Calu3 (cell line): ENCODE measurements at regions of chr12 and their contacts with region 1.

Region 1: DNA sequence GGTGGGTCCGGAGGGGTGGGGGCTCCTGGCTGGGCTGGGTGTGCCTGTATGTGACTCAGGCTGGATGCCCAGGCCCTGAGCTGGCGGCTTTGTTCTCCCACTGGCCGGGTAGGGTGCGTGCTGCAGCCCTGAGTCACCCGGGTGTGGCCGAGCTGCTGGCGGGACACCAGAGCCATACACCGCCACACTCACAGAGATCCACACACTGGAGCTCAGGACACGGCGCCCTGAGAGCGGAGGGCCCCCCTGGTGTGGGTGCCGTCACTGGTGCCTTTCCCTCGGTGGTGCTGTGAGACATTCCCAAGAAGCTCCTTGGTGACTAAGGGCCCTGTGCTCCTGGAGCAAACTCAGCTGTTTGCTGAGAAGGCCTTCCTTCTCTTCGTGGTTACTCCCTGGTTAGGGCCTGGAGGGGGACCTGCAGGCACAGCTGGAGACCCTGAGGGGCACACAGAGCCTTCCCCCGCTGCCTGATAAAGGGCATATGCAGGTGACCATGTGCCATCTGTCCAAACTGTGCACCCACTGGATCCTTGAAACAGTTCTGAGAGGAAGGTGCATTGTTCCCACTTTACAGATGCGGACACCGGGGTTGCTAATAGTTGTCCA is 44.3 kb downstream of the KRT80 start:
- DNase-seq: peak; percentile 96
- H3K4me3 Mint-ChIP-seq: peak overlapping the region; percentile 60
- H3K27ac Mint-ChIP-seq: peak overlapping the region; percentile 100
- H3K4me1 Mint-ChIP-seq: peaks cover 65% of the 10 kb centered on the region
- H3K27me3 Mint-ChIP-seq: no peaks in the 10 kb centered on the region
- CTCF ChIP-seq: no peak

Region 2: GRCh38 chr12:51846911-51847642 is 300.4 kb before region 1 on chr12:
- CTCF ChIA-PET with region 1: no interaction called
- intact Hi-C with region 1: no loop called
- DNase-seq: peak; percentile 22
- H3K4me3 Mint-ChIP-seq: peak overlapping the region; percentile 7
- H3K27ac Mint-ChIP-seq: no peak overlapping the region
- H3K4me1 Mint-ChIP-seq: peaks cover 7% of the 10 kb centered on the region
- H3K27me3 Mint-ChIP-seq: peaks cover 75% of the 10 kb centered on the region
- CTCF ChIP-seq: no peak

Region 3: DNA sequence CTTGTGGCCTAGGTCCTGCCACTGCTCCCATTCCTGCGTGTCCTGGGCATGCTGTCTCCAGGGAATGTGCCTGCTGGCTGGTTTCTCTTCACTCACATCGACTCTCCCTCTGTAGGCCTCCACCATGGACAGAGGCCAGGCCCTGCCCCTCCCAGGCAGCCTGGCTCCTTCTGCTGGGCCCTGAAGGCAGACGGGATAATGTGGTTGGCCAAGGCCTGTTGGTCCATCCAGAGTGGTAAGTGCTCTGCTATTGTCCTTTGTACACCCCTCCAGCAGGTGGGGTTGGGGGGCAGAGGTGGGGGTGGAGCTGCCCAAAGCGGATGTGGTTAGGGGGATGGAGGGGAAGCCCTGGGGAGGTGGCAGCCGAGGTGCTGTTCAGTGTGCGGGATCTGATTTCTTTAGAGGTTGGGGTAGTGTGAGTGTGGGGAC is 105.8 kb before region 1 on chr12:
- CTCF ChIA-PET with region 1: no interaction called
- intact Hi-C with region 1: no loop called
- DNase-seq: no peak
- H3K4me3 Mint-ChIP-seq: no peak overlapping the region
- H3K27ac Mint-ChIP-seq: no peak overlapping the region
- H3K4me1 Mint-ChIP-seq: no peaks in the 10 kb centered on the region
- H3K27me3 Mint-ChIP-seq: no peaks in the 10 kb centered on the region
- CTCF ChIP-seq: no peak

Region 4: DNA sequence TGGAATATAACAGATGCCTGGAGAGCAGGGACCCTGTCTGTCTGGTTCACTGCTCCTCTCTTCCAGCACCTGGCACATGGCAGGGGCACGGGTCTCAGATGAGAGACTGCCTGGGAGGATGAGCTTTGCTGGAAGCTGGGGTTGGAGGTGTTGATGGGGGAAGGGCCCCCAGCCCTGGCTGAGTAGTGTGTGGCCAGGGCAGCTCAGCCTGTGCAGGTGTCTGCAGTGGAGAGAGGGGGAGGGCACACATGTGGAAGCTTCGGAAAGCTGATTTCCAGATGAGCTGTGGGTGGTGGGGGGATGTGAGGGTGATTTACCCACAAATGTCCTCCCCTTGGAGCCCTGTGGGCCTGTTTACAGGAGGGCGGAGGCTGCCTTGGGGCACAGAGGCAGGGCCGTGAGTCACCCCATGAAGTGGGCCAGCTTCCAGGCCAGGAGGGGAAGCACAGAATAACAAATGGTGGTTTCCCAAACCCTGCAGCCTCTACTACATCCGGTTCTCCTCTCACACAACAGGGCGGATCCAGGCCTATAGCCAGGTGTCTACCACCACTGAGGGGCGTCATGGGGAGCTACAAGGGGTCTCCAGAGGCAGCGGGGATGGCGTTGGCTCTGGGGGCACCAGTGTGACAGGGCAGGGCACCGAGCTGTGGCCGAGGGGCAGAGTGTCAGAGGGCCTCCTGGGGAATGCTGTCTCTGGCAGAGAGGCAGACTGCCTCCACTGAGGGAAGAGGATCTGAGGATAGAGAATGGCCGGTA is 96.6 kb after region 1 on chr12:
- CTCF ChIA-PET with region 1: interaction called, 10 read pairs
- intact Hi-C with region 1: no loop called
- DNase-seq: peak; percentile 85
- H3K4me3 Mint-ChIP-seq: peak overlapping the region; percentile 61
- H3K27ac Mint-ChIP-seq: peak overlapping the region; percentile 96
- H3K4me1 Mint-ChIP-seq: peaks cover 65% of the 10 kb centered on the region
- H3K27me3 Mint-ChIP-seq: no peaks in the 10 kb centered on the region
- CTCF ChIP-seq: no peak

Region 5: DNA sequence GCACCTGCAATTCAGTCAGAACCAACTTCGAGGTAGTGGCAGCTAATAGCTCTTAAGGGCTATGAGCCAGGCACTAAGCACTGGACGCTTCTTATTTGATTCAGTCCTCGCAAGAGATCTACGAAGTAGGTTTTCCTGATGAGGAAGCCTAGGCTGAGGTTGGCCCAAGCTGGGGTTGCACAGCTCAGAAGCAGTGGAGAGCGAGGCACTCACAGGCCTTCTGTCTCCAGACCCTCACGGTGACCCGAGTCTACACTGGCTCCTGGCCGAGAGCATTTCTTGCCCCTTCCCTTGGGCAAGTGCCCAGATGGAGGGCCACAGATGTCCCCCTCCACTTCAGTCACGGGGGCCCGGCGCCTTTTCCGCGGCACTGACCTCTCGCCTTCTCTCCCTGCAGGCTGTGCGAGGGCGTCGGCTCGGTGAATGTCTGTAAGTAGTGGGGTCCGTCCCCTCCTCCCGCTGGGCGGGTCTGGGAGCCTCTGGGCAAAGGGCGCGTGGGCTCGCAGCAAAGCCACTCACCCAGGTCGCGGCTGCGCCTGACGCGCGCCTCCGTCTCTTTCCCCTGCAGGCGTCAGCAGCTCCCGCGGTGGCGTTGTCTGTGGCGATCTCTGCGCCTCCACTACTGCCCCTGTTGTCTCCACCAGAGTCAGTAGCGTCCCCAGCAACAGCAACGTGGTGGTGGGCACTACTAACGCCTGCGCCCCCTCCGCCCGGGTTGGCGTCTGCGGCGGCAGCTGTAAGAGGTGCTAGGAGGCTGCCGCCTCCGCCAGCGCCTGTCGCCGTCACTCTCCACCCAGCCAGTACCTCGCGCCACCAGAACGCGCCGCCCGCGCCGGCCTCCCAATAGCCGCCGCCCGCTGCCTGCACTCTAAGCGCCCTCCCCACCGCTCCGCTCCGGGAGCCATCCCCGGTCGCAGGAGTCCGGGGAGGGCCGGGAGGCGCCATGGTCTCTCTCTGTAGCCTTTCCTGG is 160.7 kb after region 1 on chr12:
- CTCF ChIA-PET with region 1: no interaction called
- intact Hi-C with region 1: no loop called
- DNase-seq: peak; percentile 75
- H3K4me3 Mint-ChIP-seq: peak overlapping the region; percentile 84
- H3K27ac Mint-ChIP-seq: peak overlapping the region; percentile 42
- H3K4me1 Mint-ChIP-seq: peaks cover 42% of the 10 kb centered on the region
- H3K27me3 Mint-ChIP-seq: peaks cover 13% of the 10 kb centered on the region
- CTCF ChIP-seq: no peak

Region 6: DNA sequence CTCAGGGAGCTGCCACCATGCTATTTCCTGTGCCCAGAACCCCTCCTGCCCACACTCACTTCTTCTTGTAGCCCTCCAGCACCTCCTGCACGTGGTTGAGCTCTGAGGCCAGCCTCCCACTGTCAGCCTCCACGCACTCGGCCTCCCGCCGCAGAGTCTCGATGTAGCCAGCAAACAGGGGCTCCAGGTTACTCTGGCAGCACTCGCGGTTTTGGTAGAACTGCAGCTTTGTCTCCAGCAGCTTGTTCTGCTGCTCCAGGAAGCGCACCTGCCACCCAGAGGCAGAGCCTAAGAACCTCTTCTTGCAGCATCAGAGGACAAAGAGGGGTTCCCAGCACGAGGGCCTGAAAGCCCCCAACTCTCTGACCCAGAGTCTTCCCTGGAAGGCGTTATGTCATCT is 171.6 kb after region 1 on chr12:
- CTCF ChIA-PET with region 1: no interaction called
- intact Hi-C with region 1: no loop called
- DNase-seq: peak; percentile 37
- H3K4me3 Mint-ChIP-seq: no peak overlapping the region
- H3K27ac Mint-ChIP-seq: no peak overlapping the region
- H3K4me1 Mint-ChIP-seq: peaks cover 8% of the 10 kb centered on the region
- H3K27me3 Mint-ChIP-seq: no peaks in the 10 kb centered on the region
- CTCF ChIP-seq: no peak